Panc1 (cell line): ENCODE measurements at regions of chr4 and their contacts with region 1.

Region 1: GRCh38 chr4:75469896-75470295 is 44.3 kb downstream of the RCHY1 start:
- DNase-seq: no peak
- ATAC-seq: no peak
- H3K4me3 ChIP-seq: no peak overlapping the region
- H3K27ac ChIP-seq: no peak overlapping the region
- H3K4me1 ChIP-seq: no peaks in the 10 kb centered on the region
- H3K27me3 ChIP-seq: no peaks in the 10 kb centered on the region
- CTCF ChIP-seq: no peak

Region 2: DNA sequence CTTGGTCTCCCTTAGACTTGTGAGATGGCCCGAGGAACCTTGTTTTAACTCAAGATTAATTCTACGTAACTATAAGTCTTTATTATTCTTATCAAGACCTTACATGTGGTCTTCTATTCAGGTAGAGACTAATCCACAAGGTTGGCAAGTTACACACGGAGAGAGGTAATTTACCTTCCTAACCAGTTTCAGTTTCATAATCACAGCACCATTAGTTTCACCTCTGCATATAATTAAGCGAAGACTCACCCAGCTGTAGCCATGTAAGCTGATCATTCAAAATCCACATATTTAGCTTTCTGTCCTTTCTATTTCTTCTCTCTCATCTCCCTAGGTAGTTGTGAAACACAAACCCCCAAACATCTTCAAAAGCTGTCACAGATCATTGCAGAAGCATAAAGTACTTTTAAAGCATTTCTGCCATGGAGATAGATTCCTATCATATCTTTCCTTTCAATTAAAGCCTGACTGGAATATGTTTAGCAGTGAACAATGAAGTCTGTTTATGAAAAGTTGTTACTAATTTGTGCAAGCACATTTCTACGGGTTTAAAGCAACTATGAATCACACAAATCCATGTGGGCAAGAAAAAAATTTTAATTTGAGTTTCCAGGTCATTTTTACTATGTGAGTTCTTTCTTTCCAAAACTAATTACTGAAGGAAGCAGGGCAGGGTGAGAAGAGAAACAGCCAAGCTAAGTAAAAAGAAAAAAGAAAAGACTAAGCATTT is 754.0 kb before region 1 on chr4:
- CTCF ChIA-PET with region 1: no interaction called
- POLR2A ChIA-PET with region 1: interaction called, 10 read pairs
- in situ Hi-C with region 1: no loop called
- intact Hi-C with region 1: no loop called
- DNase-seq: no peak
- ATAC-seq: no peak
- H3K4me3 ChIP-seq: no peak overlapping the region
- H3K27ac ChIP-seq: no peak overlapping the region
- H3K4me1 ChIP-seq: no peaks in the 10 kb centered on the region
- H3K27me3 ChIP-seq: no peaks in the 10 kb centered on the region
- CTCF ChIP-seq: no peak

Region 3: GRCh38 chr4:74874753-74875367 is 595.0 kb before region 1 on chr4:
- CTCF ChIA-PET with region 1: no interaction called
- POLR2A ChIA-PET with region 1: no interaction called
- in situ Hi-C with region 1: no loop called
- intact Hi-C with region 1: loop called (anchors 10 kb)
- DNase-seq: peak; percentile 45
- ATAC-seq: peak; percentile 82
- H3K4me3 ChIP-seq: no peak overlapping the region
- H3K27ac ChIP-seq: no peak overlapping the region
- H3K4me1 ChIP-seq: no peaks in the 10 kb centered on the region
- H3K27me3 ChIP-seq: no peaks in the 10 kb centered on the region; the same call in 1 of the 2 replicates
- CTCF ChIP-seq: peak; percentile 77